AG04449 (cell line): ENCODE measurements at regions of chr5 and their contacts with region 1.

Region 1: DNA sequence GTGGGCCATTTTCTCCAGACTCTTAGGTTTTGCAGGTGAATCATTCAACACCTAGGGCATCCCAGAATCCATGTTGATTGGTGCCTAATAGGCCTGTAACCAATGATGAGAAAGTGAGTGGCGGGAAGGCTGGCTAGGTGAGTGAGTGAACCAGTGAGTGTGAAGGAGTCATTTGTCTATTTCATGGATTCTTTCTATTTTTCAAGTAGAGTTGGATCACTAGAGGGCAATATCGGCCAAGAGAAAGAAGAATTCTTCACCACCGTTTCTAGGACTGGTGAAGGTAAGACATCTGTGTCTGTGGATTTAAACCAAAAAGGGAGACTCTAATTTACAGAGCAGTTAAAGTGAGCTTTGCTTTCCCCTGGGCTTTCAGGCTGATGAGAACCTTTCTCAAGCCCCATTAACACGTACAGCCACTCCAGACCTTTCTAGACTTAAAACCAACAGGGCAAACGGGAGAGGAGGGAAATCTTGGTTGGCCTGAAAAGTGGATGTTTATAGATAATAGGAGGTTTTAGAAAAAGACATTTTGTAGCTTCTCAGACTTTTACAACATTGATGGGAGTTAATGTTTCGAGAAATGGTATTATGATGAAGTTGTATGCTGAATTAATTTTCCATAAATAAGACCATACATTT is 114.3 kb upstream of the IL12B start:
- DNase-seq: no peak
- H3K4me3 ChIP-seq: no peak overlapping the region
- CTCF ChIP-seq: peak; percentile 28

Region 2: DNA sequence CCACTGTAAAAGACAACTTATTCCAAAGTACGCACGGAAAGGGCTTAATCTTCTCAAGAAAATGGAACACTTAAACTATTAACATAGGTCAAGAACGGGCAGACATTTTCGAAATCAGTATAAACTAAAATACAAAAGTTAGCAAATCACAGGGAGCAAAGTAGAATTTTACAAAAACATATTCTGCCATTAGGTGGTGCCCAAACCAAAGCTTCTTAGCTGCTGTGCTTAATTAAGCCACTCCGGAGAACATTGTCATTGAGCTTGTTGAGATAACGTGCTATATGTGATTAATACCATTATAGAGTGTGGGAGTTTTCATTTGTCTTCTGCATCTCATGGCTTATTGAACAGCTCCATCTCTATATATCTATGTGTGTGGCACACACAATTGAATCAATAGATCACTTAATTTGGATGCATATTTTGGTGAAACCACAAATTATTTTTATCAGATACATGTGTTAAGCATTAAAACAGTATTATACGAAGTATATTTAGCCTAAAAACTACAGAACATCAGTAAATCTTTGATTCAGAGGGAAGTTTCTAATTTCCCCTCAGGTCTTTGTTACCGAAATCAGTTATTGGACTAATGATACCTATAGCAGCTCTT is 158.0 kb before region 1 on chr5:
- CTCF ChIA-PET with region 1: interaction called, 55 read pairs
- POLR2A ChIA-PET with region 1: no interaction called
- DNase-seq: no peak
- H3K4me3 ChIP-seq: no peak overlapping the region
- CTCF ChIP-seq: peak; percentile 44

Region 3: GRCh38 chr5:159456722-159457465 is 12.3 kb after region 1 on chr5:
- CTCF ChIA-PET with region 1: interaction called, 22 read pairs
- POLR2A ChIA-PET with region 1: no interaction called
- DNase-seq: no peak
- H3K4me3 ChIP-seq: no peak overlapping the region
- CTCF ChIP-seq: no peak

Region 4: GRCh38 chr5:159915904-159916840 is 471.6 kb after region 1 on chr5 and contains the start of gene ADRA1B:
- CTCF ChIA-PET with region 1: interaction called, 116 read pairs
- POLR2A ChIA-PET with region 1: no interaction called
- DNase-seq: no peak
- H3K4me3 ChIP-seq: peak within 1 kb of the TSS; percentile 54
- CTCF ChIP-seq: peak; percentile 89

Region 5: GRCh38 chr5:159965031-159965837 is 520.7 kb after region 1 on chr5:
- CTCF ChIA-PET with region 1: interaction called, 25 read pairs
- POLR2A ChIA-PET with region 1: no interaction called
- DNase-seq: no peak
- H3K4me3 ChIP-seq: no peak overlapping the region
- CTCF ChIP-seq: peak; percentile 75